Activated T-helper 2 cell treated with anti-CD3 and anti-CD28 coated beads, Interferon-gamma antibody, Interleukin-2, Interleukin-4, amounts not matched to agents 10 μg/mL and 5 μg/mL and 100 μg/mL, durations not matched to agents 14 hours and 24 hours and 36 hours (primary cell): ENCODE measurements at regions of chr3 and their contacts with region 1.

Region 1: DNA sequence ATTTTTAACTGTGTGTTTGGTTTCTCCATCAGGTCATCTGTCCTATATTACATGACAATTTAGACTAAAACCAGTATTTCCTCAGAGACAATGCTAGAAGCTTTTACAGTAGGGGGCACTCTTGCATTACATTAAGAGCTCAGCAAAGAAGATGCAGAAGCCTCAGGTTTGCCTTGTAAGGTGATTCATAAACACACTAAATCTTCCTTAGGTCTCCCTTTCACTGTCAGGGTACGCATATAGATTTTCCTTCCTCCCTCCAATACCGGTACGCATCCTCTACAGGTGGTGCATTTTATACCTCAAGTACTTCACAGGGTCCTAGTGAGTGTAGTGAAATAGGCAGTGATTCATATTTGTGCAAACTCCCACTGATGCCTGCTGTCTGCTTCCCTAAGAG is 46.5 kb downstream of the CD86 start:
- DNase-seq: no peak
- H3K4me3 Mint-ChIP-seq: no peak overlapping the region
- H3K27ac Mint-ChIP-seq: peak overlapping the region; percentile 62
- H3K4me1 Mint-ChIP-seq: peaks cover 38% of the 10 kb centered on the region
- H3K27me3 Mint-ChIP-seq: no peaks in the 10 kb centered on the region

Region 2: GRCh38 chr3:121834696-121835464 is 266.8 kb before region 1 on chr3 and contains the starts of genes EAF2 and IQCB1:
- intact Hi-C with region 1: loop called (anchors 2 kb)
- DNase-seq: peak; percentile 96
- H3K4me3 Mint-ChIP-seq: peak within 1 kb of the TSS; percentile 98
- H3K27ac Mint-ChIP-seq: peak within 1 kb of the TSS; percentile 97
- H3K4me1 Mint-ChIP-seq: peaks cover 61% of the 10 kb centered on the region
- H3K27me3 Mint-ChIP-seq: no peaks in the 10 kb centered on the region
- total RNA-seq, gene EAF2: 18.5 and 19.2 TPM in 2 replicates
- total RNA-seq, gene IQCB1: 43.4 and 44.0 TPM in 2 replicates

Region 3: DNA sequence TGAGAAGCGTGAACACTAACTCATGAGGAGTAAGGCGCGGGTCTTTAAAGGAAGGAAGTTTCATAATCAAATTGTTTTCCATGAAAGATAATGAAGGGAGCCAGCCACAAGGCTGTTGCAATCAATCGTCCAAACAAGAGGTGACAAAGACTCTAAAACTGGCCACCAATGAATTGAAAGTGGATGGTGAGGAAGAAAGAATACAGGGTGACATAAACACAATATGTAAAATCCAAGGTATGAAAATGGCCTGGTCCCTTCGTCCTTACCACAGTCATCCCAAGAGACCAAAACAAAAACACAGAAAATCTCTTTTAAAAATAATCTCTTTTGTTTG is 34.5 kb before region 1 on chr3:
- intact Hi-C with region 1: loop called (anchors 5 kb)
- DNase-seq: no peak
- H3K4me3 Mint-ChIP-seq: peak overlapping the region; percentile 41
- H3K27ac Mint-ChIP-seq: peak overlapping the region; percentile 64
- H3K4me1 Mint-ChIP-seq: peaks cover 31% of the 10 kb centered on the region
- H3K27me3 Mint-ChIP-seq: no peaks in the 10 kb centered on the region

Region 4: GRCh38 chr3:122146466-122146865 is 44.8 kb after region 1 on chr3:
- intact Hi-C with region 1: loop called (anchors 1 kb)
- DNase-seq: peak; percentile 56
- H3K4me3 Mint-ChIP-seq: no peak overlapping the region
- H3K27ac Mint-ChIP-seq: peak overlapping the region; percentile 46
- H3K4me1 Mint-ChIP-seq: peaks cover 31% of the 10 kb centered on the region
- H3K27me3 Mint-ChIP-seq: no peaks in the 10 kb centered on the region

Region 5: DNA sequence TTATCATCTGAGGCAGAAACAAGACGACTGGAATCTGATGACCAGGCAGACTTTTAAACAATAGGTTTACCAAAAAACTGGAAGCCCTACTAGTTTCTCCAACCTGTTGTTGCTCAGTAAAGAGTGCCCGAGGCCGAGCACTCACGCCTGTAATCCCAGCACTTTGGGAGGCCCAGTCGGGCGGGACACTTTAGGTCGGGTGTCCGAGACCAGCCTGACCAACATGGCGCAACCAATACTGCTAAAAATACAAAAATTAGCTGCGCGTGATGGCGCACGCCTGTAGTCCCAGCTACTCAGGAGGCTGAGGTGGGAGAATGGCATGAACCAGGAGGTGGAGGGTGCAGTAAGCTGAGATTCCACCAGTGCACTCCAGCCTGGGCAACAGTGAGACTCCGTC is 315.3 kb after region 1 on chr3:
- intact Hi-C with region 1: no loop called
- DNase-seq: no peak
- H3K4me3 Mint-ChIP-seq: peak overlapping the region; percentile 93
- H3K27ac Mint-ChIP-seq: peak overlapping the region; percentile 95
- H3K4me1 Mint-ChIP-seq: peaks cover 22% of the 10 kb centered on the region
- H3K27me3 Mint-ChIP-seq: no peaks in the 10 kb centered on the region